Mammary epithelial cell (primary cell): ENCODE measurements at regions of chr11 and their contacts with region 1.

Region 1: GRCh38 chr11:35376613-35377012 is 42.7 kb downstream of the SLC1A2 start:
- DNase-seq: no peak
- H3K4me3 ChIP-seq: no peak overlapping the region
- H3K27ac ChIP-seq: no peak overlapping the region
- H3K4me1 ChIP-seq: no peaks in the 10 kb centered on the region
- H3K27me3 ChIP-seq: no peaks in the 10 kb centered on the region
- CTCF ChIP-seq: no peak

Region 2: GRCh38 chr11:35321532-35322359 is 54.9 kb before region 1 on chr11:
- CTCF ChIA-PET with region 1: no interaction called
- dilution Hi-C with region 1: loop called (anchors 5 kb)
- in situ Hi-C with region 1: no loop called
- intact Hi-C with region 1: no loop called
- DNase-seq: no peak
- H3K4me3 ChIP-seq: no peak overlapping the region
- H3K27ac ChIP-seq: no peak overlapping the region
- H3K4me1 ChIP-seq: peaks cover 9% of the 10 kb centered on the region
- H3K27me3 ChIP-seq: no peaks in the 10 kb centered on the region
- CTCF ChIP-seq: no peak

Region 3: DNA sequence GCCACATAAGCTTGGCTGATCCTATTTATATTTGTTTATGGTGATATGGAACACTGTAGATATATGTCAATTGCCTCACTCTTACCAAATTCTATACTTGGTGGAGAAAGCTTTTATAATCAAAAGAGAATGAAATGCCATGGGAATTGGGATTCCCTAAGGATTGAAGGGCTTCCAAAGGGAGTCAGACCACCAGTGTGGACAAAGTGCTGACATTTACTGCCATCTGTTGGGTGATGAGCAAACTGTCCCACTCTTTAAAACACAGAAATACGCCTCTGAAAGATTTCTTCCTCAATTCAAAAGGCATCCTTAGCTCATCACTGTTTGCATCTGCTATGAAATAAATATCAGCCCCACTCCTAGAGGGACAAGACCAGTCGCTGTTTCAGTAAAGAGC is 35.7 kb after region 1 on chr11:
- CTCF ChIA-PET with region 1: no interaction called
- dilution Hi-C with region 1: no loop called
- in situ Hi-C with region 1: no loop called
- intact Hi-C with region 1: no loop called
- DNase-seq: no peak
- H3K4me3 ChIP-seq: no peak overlapping the region
- H3K27ac ChIP-seq: no peak overlapping the region
- H3K4me1 ChIP-seq: no peaks in the 10 kb centered on the region
- H3K27me3 ChIP-seq: peaks cover 20% of the 10 kb centered on the region
- CTCF ChIP-seq: peak; percentile 37